ENCODE measurements at regions of chr15 and their contacts with region 1.

Region 1: GRCh38 chr15:101277038-101277882 is at the start of gene SELENOS:
- DNase-seq: peak; percentile 88
- H3K4me3 Mint-ChIP-seq: peak within 1 kb of the TSS; percentile 98
- H3K27ac Mint-ChIP-seq: peak within 1 kb of the TSS; percentile 88
- H3K4me1 Mint-ChIP-seq: peaks cover 38% of the 10 kb centered on the region
- H3K27me3 Mint-ChIP-seq: no peaks in the 10 kb centered on the region
- total RNA-seq, gene SELENOS: 47.4 and 53.0 TPM in 2 replicates

Region 2: DNA sequence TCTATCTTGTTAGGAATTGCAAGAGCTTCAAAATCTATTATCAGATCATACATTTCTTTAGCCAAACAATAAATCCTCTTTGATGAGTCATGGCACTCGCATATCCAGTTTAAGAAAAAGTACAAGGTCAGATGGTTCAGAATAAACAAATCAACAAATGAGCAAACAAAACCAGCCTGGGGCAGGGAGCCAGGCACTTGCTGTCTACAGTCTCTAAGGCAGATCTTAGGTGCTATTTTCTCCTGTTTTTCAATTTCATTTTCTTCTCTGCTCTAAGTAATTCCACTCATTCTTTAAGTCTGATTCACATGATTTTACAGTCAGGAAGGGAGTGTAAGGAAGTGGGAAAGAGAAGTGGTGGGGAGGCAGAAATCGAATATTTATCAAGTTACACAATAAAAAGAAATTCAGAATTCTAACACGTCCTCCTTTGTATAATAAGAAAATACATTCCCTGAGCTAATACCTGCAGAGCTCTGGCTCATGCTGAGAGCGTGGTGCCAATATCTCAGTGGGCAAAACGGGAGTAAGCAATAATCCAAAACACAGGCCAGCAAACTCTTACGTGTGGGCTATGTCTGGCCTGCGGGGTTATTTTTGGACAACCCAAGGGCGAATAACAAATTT is 1234.1 kb before region 1 on chr15:
- intact Hi-C with region 1: no loop called
- DNase-seq: no peak
- H3K4me3 Mint-ChIP-seq: no peak overlapping the region
- H3K27ac Mint-ChIP-seq: no peak overlapping the region
- H3K4me1 Mint-ChIP-seq: peaks cover 22% of the 10 kb centered on the region
- H3K27me3 Mint-ChIP-seq: peaks cover 4% of the 10 kb centered on the region

Region 3: DNA sequence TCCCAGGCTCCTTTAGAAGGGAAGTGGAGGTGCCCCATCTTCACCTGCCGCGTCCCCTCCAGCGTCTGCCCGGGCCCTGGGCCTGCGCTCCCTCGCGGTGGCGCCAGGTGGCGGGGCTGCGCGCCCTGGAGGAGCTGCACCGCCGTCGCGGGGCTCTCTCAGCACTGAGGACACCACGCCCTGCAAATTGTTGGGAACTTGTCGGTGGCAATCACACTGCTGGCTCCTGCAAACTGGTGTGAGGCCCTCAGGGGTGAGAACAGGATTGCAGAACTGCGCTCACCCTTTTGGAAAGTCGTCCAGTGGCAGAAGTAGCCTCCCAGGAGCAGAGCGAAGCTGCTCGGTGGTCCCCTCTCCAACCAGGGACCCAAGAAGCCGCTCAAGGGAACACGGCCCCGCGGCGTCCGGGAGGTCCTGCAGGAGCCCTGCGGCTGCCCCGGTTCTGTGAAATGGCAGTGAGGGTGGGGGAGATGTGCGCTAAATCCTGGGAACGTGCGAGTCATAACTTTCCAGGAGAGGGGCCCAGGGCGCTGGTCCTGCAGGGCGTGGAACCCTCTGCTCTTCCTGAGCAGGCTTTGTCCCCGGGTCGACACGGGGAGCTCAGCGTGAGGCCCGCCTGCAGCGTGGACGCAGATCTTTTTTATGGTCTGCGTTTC is 359.1 kb before region 1 on chr15:
- intact Hi-C with region 1: loop called (anchors 5 kb)
- DNase-seq: peak; percentile 64
- H3K4me3 Mint-ChIP-seq: peak overlapping the region; percentile 83
- H3K27ac Mint-ChIP-seq: no peak overlapping the region
- H3K4me1 Mint-ChIP-seq: peaks cover 17% of the 10 kb centered on the region
- H3K27me3 Mint-ChIP-seq: peaks cover 55% of the 10 kb centered on the region

Region 4: GRCh38 chr15:101014921-101015841 is 262.1 kb before region 1 on chr15:
- intact Hi-C with region 1: loop called (anchors 1 kb)
- DNase-seq: peak; percentile 49
- H3K4me3 Mint-ChIP-seq: no peak overlapping the region
- H3K27ac Mint-ChIP-seq: no peak overlapping the region
- H3K4me1 Mint-ChIP-seq: peaks cover 5% of the 10 kb centered on the region
- H3K27me3 Mint-ChIP-seq: peaks cover 6% of the 10 kb centered on the region

Region 5: DNA sequence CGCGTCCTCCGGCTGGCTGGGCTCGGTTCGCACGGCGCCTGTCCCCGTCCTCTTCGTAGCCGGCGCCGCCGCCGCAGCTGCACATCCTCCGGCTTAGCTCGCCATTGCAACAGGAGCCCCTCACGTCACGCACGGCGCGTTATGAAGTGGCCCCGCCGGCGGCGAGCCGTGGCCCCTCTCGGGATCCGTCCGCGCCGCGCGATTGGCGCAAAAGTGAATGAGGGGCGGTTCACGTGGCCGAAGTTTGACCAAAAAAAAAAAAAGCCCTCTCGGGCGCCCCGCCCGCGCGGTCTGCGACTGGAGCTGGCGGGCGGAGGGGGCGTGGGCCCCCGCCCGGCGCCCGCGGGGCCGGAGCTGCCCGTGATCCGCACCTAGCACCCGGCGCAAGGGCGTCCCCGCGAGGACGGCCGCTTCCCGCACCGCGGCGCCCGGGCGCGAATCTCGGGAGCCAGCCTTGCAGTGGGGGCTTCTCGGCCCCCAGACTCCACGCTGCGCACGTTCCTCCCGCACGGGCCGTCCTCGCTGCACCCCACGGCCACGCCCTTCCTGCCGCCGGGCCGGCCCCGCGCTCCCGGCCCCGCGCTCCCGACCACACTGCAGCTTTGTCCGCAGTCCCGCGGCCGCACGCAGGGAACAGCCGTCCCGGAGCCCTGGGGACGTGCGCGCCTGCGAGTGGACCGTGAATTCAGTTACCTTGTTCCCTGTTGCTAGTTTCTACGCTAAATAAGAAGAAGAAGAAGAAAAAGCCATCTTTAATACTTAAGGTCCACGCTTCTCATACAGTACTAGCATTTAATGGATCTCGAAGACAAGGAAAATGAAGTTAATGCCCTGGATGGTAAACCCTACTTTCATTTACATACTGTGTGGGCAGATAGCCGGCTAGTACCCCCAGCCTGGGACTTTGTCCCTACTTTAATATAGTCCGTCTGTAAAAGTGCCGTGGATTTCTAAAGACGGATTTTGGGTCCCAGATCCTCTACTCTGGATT is 25.1 kb before region 1 on chr15 and contains the start of gene CHSY1:
- intact Hi-C with region 1: loop called (anchors 1 kb)
- DNase-seq: peak; percentile 88
- H3K4me3 Mint-ChIP-seq: peak within 1 kb of the TSS; percentile 91
- H3K27ac Mint-ChIP-seq: peak within 1 kb of the TSS; percentile 90
- H3K4me1 Mint-ChIP-seq: peaks cover 69% of the 10 kb centered on the region
- H3K27me3 Mint-ChIP-seq: no peaks in the 10 kb centered on the region
- total RNA-seq, gene CHSY1: 76.3 and 78.0 TPM in 2 replicates

Region 6: DNA sequence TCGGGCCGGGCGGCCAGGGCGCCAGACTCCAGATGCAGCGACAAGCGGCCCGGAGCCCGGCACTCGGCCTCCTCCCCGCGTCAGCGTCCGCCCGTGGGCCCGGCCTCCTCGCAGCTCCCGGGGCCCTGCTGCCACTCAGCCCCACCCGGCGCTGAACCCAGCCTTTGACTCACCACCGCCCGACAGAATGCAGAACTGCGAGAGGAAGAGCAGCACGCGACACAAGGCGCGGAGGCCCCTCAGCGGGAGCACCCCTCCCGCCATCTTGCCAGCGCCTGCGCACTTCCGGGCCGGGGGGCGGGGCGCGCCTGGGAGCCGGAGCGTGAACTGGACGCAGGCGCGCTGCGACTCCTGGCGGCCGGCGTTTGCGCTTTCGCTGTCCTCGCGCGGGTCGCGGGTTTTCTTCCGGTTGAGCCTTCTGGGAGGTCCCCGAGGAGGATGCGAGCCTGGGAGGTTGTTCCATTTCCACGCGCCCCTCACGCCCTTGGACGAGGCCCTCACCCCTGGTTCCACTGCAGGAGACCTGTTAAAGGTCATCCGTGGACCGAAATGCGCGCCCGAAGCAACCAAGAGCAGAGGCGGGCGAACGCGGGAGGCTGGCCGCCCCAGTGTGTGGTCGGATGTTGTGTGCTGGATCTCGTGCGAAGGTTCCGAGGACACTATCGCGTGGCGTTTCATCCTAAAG is 375.0 kb after region 1 on chr15 and contains the start of gene TM2D3:
- intact Hi-C with region 1: loop called (anchors 1 kb)
- DNase-seq: peak; percentile 94
- H3K4me3 Mint-ChIP-seq: peak within 1 kb of the TSS; percentile 93
- H3K27ac Mint-ChIP-seq: peak within 1 kb of the TSS; percentile 93
- H3K4me1 Mint-ChIP-seq: peaks cover 36% of the 10 kb centered on the region
- H3K27me3 Mint-ChIP-seq: no peaks in the 10 kb centered on the region
- total RNA-seq, gene TM2D3: 57.1 and 62.4 TPM in 2 replicates

Region 7: GRCh38 chr15:101723874-101724674 is 446.8 kb after region 1 on chr15 and contains the start of gene TARS3:
- intact Hi-C with region 1: loop called (anchors 5 kb)
- DNase-seq: peak; percentile 83
- H3K4me3 Mint-ChIP-seq: peak within 1 kb of the TSS; percentile 88
- H3K27ac Mint-ChIP-seq: peak within 1 kb of the TSS; percentile 95
- H3K4me1 Mint-ChIP-seq: peaks cover 30% of the 10 kb centered on the region
- H3K27me3 Mint-ChIP-seq: peaks cover under 1% of the 10 kb centered on the region
- total RNA-seq, gene TARS3: 13.9 and 15.2 TPM in 2 replicates